ENCODE measurements at regions of chr1 and their contacts with region 1.

Region 1: GRCh38 chr1:225777583-225778336 is at the start of gene SRP9:
- DNase-seq: peak; percentile 99
- ATAC-seq: peak; percentile 97
- H3K4me3 Mint-ChIP-seq: no peak within 1 kb of the TSS
- H3K27ac Mint-ChIP-seq: no peak within 1 kb of the TSS
- H3K4me1 Mint-ChIP-seq: peaks cover 27% of the 10 kb centered on the region
- H3K27me3 Mint-ChIP-seq: no peaks in the 10 kb centered on the region
- CTCF ChIP-seq: peak; percentile 85
- total RNA-seq, gene SRP9: 275 to 304 TPM

Region 2: DNA sequence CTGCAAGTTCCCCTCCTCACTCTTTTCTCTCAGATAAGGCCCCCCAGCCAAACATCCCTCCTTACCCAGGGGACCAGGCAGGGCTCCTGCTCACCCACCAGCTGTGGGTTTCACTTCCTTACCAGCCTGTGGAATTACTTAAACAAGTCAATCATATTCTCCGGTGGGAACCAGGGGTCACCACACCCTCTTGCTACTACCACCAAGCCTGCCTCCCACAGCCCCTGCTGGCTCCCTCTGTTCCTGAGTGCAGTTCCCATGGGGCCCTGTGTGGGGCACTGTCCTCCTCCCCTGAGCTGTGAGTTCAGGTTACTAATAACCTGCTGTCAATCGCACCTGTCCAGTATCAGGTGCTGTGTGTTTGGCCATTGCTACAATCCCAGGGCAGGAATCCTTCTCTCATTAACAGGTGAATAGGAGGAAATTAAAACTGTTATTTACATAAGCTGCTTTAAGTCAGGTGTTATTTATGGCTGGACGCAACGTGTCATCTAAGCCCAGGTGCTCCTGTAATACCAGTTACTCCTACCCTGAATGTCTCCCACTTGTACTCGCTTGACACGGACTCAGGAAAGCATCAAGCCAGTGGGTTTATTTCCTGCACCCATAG is 296.8 kb before region 1 on chr1:
- CTCF ChIA-PET with region 1: interaction called, 25 read pairs
- POLR2A ChIA-PET with region 1: no interaction called
- intact Hi-C with region 1: loop called (anchors 5 kb)
- DNase-seq: peak; percentile 76
- ATAC-seq: peak; percentile 80
- H3K4me3 Mint-ChIP-seq: no peak overlapping the region
- H3K27ac Mint-ChIP-seq: no peak overlapping the region
- H3K4me1 Mint-ChIP-seq: peaks cover 24% of the 10 kb centered on the region
- H3K27me3 Mint-ChIP-seq: no peaks in the 10 kb centered on the region
- CTCF ChIP-seq: peak; percentile 97

Region 3: GRCh38 chr1:225881969-225882693 is 104.4 kb after region 1 on chr1 and contains the start of gene TMEM63A:
- CTCF ChIA-PET with region 1: interaction called, 30 read pairs
- POLR2A ChIA-PET with region 1: interaction called, 14 read pairs
- intact Hi-C with region 1: no loop called
- DNase-seq: peak; percentile 94
- ATAC-seq: peak; percentile 71
- H3K4me3 Mint-ChIP-seq: peak within 1 kb of the TSS; percentile 76
- H3K27ac Mint-ChIP-seq: peak within 1 kb of the TSS; percentile 88
- H3K4me1 Mint-ChIP-seq: peaks cover 51% of the 10 kb centered on the region
- H3K27me3 Mint-ChIP-seq: no peaks in the 10 kb centered on the region
- CTCF ChIP-seq: no peak
- total RNA-seq, gene TMEM63A: 51.4 to 54.6 TPM

Region 4: DNA sequence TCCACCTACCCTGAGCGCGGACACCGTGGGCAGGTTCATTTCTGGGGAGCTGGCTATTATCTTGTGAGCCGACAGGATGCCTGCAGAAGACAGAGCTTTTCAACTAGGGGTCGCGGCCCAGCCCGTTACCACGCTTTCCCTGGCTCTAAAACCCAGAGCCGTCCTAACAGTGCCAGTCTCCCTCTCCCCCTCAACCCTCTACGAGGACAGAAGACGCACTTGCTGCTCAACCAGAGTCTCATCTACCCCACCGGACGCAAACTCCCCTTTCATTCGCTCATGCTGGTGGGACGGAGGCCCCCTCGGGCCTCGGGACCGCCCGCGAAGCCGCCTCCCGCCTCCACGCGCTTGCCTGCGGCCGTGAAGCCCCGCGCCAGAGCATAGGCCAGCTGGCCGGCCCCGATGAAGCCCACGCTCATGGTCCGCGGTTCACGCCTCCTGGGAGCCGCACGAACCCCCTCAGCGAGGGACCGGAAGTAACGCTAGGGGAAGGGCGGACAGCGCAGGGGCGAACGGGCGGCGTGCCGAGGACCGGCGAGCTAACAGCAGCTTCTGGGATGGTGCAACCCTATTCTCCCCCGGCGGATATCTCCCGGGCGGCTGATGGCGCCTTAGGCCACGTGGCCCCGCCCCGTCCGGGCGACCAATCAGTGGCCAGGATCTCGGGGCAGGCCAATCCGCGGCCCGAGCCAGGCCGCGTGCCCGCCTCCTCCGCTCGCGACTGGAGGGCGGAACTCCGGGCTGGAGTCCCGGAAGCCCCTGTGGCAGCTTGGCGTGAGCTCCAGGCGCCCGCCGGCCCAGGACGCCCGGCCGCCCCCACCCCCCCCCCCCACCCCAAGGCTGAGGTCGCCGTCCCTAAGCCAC is 146.2 kb after region 1 on chr1 and contains the start of gene PYCR2:
- CTCF ChIA-PET with region 1: interaction called, 9 read pairs
- POLR2A ChIA-PET with region 1: interaction called, 17 read pairs
- intact Hi-C with region 1: no loop called
- DNase-seq: peak; percentile 96
- ATAC-seq: peak; percentile 98
- H3K4me3 Mint-ChIP-seq: peak within 1 kb of the TSS; percentile 91
- H3K27ac Mint-ChIP-seq: peak within 1 kb of the TSS; percentile 97
- H3K4me1 Mint-ChIP-seq: peaks cover 52% of the 10 kb centered on the region
- H3K27me3 Mint-ChIP-seq: no peaks in the 10 kb centered on the region
- CTCF ChIP-seq: no peak
- total RNA-seq, gene PYCR2: 132 to 134 TPM

Measured in activated CD8-positive, alpha-beta T cell treated with anti-CD3 and anti-CD28 coated beads for 36 hours (primary cell).